Activated CD8-positive, alpha-beta T cell treated with anti-CD3 and anti-CD28 coated beads, Interleukin-2, amount 10 ng/mL, durations not matched to agents 7 days and 5 days (primary cell): ENCODE measurements at regions of chr11 and their contacts with region 1.

Region 1: DNA sequence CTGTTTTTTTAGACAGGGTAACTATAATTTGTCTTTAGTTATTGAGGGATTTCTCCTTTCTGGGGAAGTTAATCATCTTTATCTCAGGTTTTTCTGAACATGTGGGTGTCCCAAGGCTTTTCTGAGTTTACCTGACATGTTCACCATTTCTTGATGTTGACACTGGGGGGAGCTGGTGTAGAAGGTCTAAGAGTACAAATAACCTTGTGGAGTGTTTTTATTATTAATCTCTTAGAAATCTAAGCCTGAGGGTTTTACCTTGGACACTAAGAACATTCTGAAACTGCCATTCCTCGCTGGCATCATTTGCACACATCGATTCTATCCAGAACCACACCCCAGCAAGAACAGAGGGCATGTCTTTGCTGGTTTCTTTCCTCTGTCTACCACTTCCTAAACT is 15.6 kb upstream of the C11orf91 start:
- DNase-seq: no peak
- ATAC-seq: no peak
- H3K4me3 Mint-ChIP-seq: no peak overlapping the region
- H3K27ac Mint-ChIP-seq: no peak overlapping the region
- H3K4me1 Mint-ChIP-seq: peaks cover 11% of the 10 kb centered on the region
- H3K27me3 Mint-ChIP-seq: no peaks in the 10 kb centered on the region

Region 2: DNA sequence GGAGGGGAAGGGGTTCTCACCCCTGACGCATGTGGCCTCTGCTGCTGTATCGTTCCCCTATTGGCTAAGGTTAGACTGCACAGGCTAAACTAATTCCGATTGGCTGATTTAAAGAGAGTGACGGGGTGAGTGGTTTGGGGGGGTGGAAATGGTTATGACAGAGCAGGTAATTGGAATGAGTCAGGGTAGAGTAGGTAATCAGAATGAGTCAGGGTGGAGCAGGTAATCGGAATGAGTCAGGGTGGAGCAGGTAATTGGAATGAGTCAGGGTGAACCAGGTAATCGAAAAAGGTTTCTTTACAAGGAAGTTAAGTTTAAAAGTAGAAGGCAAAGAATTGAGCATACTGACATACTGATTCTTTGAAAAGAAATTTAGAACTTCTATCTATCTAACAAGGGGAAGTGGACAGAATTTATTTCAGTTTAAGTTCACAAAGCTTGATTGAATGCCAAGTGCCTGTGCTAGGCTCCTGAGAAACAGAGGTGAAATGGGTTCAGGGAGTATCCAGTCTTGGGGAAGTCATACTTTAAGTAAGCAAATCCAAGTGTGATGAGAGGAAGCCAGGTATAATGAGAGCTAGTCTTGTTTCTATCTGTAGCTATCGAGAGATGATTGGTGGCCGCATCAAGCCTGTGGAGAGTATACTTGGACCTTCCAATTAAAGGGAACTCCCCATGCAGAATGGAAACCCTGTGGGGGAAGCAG is 73.6 kb before region 1 on chr11:
- CTCF ChIA-PET with region 1: no interaction called
- POLR2A ChIA-PET with region 1: no interaction called
- DNase-seq: no peak
- ATAC-seq: no peak
- H3K4me3 Mint-ChIP-seq: no peak overlapping the region
- H3K27ac Mint-ChIP-seq: no peak overlapping the region
- H3K4me1 Mint-ChIP-seq: no peaks in the 10 kb centered on the region
- H3K27me3 Mint-ChIP-seq: peaks cover 10% of the 10 kb centered on the region

Region 3: DNA sequence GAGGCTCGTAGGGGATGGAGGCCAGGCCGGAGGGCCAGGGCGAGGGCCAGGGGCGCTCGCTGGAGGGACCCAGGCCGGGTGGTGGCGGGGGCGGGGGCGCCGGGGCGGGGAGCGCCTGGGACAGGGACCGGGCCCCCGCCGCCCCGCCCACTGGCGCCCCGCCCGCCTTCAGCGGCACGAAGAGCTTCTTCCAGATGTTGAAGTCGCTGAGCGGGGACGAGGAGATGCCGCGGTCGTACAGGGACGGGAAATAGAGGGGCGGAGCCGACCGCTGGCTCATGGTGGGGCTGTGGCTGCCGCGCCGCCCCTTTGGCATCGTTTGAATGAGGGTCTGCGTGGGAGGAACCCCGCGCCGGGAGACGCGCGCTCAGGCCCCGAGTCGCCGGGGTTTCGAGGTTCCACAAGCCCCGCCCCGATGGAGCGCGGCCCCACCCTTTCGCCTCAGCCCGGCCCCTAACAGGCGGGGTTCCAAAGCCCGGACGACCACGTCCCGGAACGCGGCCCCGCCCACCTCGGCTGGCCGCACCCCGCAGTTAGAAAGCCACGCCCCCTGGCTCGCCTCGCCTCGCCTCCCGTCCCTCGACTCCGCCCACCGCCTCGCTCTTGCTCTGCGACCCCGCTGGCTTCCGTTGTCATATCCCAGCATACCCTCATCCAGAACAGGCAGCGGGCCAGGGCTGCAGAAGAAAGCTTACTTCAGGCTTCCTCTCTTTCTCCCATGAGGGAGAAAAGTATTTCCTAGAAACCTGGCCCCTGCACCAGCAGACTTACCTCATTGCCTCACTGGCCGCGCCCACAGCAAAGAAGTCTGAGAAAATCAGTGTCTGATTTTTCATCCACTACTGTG is 15.6 kb before region 1 on chr11 and contains the start of gene C11orf91:
- CTCF ChIA-PET with region 1: interaction called, 19 read pairs
- POLR2A ChIA-PET with region 1: no interaction called
- DNase-seq: peak; percentile 93
- ATAC-seq: peak; percentile 97
- H3K4me3 Mint-ChIP-seq: peak within 1 kb of the TSS; percentile 83
- H3K27ac Mint-ChIP-seq: peak within 1 kb of the TSS; percentile 73
- H3K4me1 Mint-ChIP-seq: peaks cover 24% of the 10 kb centered on the region
- H3K27me3 Mint-ChIP-seq: peaks cover 25% of the 10 kb centered on the region
- total RNA-seq, gene C11orf91: not detected

Region 4: DNA sequence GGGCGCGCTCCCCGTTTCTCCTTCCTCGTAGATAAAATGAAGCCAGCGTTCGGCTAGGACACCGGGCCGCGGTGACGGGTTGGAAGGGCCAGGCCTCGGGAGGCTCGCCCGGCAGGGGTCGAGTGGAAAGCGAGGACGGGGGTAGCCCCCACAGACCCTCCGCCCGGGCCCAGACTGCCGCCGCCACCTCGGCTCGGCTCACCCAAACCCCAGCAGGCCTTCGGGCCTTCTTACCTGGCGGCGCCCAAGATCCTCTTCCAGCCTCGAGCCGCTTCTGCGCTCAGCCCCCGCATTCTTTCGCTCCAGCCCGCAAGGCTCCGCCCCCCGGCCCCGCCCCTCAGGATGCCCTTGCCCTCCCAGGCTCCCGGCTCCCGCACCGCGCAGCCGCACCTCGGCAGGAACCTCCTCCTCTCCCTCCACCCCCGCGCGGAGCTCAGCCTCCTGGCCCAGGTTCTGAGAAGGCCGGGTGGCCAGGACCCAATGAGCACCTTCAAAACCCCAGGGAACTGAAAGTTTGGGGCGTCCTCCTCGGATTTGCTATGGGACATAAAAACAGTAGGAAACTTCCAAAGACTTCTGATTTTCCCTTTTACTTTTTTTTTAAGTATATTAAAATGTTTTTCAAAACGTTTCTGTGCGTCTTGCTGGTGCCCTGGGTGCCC is 20.0 kb after region 1 on chr11 and contains the start of gene CD59:
- CTCF ChIA-PET with region 1: interaction called, 58 read pairs
- POLR2A ChIA-PET with region 1: interaction called, 6 read pairs
- DNase-seq: peak; percentile 86
- ATAC-seq: peak; percentile 81
- H3K4me3 Mint-ChIP-seq: peak within 1 kb of the TSS; percentile 81
- H3K27ac Mint-ChIP-seq: peak within 1 kb of the TSS; percentile 75
- H3K4me1 Mint-ChIP-seq: peaks cover 24% of the 10 kb centered on the region
- H3K27me3 Mint-ChIP-seq: peaks cover 8% of the 10 kb centered on the region
- total RNA-seq, gene CD59: 33.7 to 35.1 TPM